ENCODE measurements at regions of chr15 and their contacts with region 1.

Region 1: DNA sequence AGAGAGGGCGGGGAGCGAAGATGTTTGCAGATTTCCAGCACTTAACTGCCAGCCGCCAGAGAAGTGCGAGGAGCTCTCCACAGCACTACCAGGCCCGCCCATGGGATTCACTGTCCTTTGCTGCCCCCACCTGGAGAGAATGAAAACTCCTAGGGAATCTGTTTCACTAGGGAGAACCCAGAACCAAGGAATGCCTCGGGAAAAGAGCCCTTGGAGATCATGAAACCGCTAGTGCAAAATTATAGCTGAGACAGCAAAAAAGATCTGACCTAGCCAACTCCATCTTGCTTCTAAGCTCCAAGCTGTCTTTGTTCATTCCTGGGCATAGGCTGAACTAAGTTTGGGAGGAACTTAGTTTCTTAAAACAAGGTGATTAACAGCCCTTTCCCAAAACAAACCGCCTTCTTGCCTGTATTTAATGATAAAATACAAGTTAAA is 82.6 kb upstream of the GCNT3 start:
- DNase-seq: peak; percentile 32
- ATAC-seq: peak; percentile 87
- H3K4me3 Mint-ChIP-seq: no peak overlapping the region
- H3K27ac Mint-ChIP-seq: peak overlapping the region; percentile 72
- H3K4me1 Mint-ChIP-seq: peaks cover 30% of the 10 kb centered on the region
- H3K27me3 Mint-ChIP-seq: no peaks in the 10 kb centered on the region
- CTCF ChIP-seq: peak; percentile 58

Region 2: DNA sequence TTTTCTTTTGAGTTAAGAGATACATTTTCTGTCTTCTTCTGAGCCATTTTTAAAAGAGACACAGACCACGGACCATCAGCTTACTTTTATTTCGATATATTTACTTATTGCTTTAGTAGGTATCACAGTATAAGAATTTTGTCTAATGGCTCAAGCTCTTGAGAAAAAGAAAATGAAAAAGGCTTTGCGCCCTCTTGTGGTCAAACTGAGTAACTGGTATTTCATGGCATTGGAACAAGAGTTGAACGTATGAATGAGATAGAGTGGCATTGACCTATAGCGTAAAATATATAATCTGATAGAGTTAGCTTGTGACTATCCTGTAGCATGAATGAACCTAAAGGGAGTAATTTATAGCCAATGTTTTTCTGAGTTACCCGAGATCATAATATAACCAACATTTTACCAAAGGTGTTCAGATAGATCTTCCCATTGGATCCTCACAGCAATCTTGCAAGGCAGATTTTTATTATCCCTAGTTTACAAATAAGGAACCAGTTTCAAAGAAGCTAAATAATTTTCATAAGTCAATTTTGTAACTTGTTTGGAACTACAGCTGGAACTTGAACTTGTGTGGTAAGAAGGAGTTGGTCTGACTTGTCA is 1667.8 kb before region 1 on chr15:
- CTCF ChIA-PET with region 1: no interaction called
- POLR2A ChIA-PET with region 1: no interaction called
- intact Hi-C with region 1: loop called (anchors 5 kb)
- DNase-seq: no peak
- ATAC-seq: no peak
- H3K4me3 Mint-ChIP-seq: no peak overlapping the region
- H3K27ac Mint-ChIP-seq: no peak overlapping the region
- H3K4me1 Mint-ChIP-seq: no peaks in the 10 kb centered on the region
- H3K27me3 Mint-ChIP-seq: peaks cover 28% of the 10 kb centered on the region
- CTCF ChIP-seq: peak; percentile 86

Region 3: DNA sequence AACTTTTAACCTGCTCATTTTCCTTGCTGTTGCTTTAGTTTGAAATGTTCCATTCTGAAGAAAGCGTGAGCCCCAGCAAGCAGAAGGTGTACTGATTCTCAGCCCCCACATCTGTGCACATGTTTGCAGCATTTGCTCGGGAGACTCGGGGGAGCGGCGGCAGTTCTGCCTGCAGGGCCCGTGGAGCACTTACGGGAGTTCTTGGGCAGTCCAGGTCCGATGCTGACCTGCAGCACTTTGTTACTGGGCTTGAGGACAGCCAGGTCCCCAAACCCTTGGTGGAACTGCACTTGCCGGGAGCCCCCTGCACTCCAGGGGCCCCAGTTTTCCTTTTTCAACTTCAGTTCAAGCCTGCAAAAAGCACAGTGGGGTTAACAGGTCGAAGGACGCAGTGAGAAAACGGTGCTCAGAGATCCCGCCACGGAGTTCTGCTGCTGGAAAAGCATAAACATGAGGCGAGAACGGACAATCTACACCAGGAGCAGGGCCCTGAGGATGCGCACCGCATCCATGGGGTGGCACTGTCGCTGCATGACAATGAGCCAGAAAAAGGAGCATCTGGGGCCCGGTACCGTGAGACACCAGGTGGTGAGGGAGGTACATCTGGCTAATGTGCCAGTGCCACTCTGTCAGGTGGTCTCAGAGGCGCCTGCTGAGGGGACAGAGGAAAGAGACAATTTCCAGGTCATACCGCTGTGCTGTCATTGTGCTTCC is 367.9 kb before region 1 on chr15:
- CTCF ChIA-PET with region 1: interaction called, 10 read pairs
- POLR2A ChIA-PET with region 1: no interaction called
- intact Hi-C with region 1: loop called (anchors 1 kb)
- DNase-seq: no peak
- ATAC-seq: no peak
- H3K4me3 Mint-ChIP-seq: no peak overlapping the region
- H3K27ac Mint-ChIP-seq: no peak overlapping the region
- H3K4me1 Mint-ChIP-seq: no peaks in the 10 kb centered on the region
- H3K27me3 Mint-ChIP-seq: no peaks in the 10 kb centered on the region
- CTCF ChIP-seq: no peak

Region 4: DNA sequence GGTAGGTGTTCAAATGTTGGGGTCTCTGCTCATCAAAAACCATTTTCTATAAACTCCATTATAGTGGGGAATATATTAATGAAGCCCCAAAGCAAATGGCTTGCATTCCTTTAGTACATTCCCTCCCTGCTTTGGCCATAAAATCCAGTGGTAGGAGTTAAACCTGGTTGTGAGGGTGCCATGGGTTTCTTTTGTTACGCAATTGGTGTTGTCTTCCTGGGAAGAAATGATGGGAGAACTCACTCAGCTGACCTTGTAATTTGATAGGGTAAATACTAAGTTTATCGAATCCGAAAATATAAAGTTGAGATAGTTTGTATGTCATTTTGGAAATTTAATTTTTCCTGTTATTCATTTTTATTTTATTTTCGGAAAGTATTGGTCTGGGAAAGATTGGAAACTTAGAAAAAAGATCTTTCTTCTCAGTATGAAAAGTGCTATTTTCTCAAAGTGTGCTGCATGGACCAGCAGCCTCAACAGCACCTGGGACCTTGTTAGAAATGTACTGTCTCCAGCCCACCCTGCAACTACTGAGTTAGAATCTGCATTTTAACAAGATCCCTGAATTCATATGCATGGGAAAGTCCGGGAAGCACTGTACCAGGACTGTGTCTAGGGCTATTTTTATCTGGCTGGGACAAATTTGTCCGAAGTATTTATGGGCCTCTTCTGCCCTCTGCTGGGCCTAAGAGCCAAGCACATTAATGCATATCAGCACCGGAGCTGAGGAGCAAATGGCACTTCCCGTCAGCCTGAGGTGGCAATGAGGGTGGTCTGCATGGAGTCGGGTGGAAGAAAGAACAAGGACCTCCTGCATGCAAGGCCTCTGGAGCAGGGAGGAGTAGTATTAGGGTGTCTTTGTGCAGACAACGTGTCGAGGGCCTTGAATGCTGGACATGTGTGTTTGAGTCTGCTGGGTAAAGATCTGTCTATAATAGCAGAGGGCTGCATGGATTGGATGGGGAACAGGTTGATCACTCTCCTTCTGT is 36.3 kb before region 1 on chr15:
- CTCF ChIA-PET with region 1: interaction called, 48 read pairs
- POLR2A ChIA-PET with region 1: interaction called, 6 read pairs
- intact Hi-C with region 1: loop called (anchors 1 kb)
- DNase-seq: peak; percentile 31
- ATAC-seq: peak; percentile 93
- H3K4me3 Mint-ChIP-seq: no peak overlapping the region
- H3K27ac Mint-ChIP-seq: peak overlapping the region; percentile 1
- H3K4me1 Mint-ChIP-seq: peaks cover 10% of the 10 kb centered on the region
- H3K27me3 Mint-ChIP-seq: no peaks in the 10 kb centered on the region
- CTCF ChIP-seq: peak; percentile 87

Region 5: GRCh38 chr15:59562448-59563186 is 33.6 kb after region 1 on chr15:
- CTCF ChIA-PET with region 1: interaction called, 11 read pairs
- POLR2A ChIA-PET with region 1: no interaction called
- intact Hi-C with region 1: loop called (anchors 2 kb)
- DNase-seq: no peak
- ATAC-seq: no peak
- H3K4me3 Mint-ChIP-seq: no peak overlapping the region
- H3K27ac Mint-ChIP-seq: no peak overlapping the region
- H3K4me1 Mint-ChIP-seq: peaks cover 6% of the 10 kb centered on the region
- H3K27me3 Mint-ChIP-seq: peaks cover 2% of the 10 kb centered on the region
- CTCF ChIP-seq: no peak

Region 6: DNA sequence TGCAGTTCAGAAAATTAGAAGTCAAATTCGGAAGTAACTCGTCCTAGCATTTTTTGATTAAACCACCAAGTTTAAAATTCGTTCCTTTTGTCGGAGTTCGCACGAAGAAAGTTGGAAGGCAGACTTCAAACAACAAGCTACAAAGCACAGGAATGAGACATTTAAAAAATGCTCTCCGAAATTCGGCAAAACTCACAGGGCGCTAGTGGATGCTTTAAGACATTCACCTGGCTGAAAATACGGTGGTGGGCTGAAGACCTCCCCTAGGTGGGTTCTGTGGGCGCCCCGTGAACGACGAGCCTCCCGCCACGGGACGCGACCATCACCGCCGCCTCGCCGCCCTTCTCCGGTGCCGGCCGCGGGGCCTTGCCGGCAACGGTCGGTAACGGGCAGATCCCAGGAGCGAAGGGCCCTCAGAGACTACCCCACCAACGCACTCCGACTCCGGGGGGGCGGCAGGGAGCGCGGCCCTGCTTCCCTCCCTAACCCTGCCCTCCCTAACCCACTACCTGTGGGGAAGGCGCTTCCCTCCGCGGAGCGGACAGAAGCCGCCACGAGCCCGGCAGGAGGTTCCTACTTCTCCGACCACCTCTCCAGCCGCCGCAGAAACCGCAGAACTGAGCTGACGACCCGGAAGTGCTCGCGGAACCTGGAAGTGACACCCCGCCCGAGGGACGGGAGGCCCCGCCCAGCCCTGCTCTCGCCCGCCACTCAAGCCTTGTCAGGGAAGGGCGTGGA is 128.1 kb after region 1 on chr15 and contains the start of gene GTF2A2:
- CTCF ChIA-PET with region 1: interaction called, 5 read pairs
- POLR2A ChIA-PET with region 1: no interaction called
- intact Hi-C with region 1: loop called (anchors 2 kb)
- DNase-seq: peak; percentile 91
- ATAC-seq: peak; percentile 100
- H3K4me3 Mint-ChIP-seq: no peak within 1 kb of the TSS
- H3K27ac Mint-ChIP-seq: peak within 1 kb of the TSS; percentile 82
- H3K4me1 Mint-ChIP-seq: peaks cover 14% of the 10 kb centered on the region
- H3K27me3 Mint-ChIP-seq: no peaks in the 10 kb centered on the region
- CTCF ChIP-seq: no peak
- total RNA-seq, gene GTF2A2: 77.4 and 95.2 TPM in 2 replicates